MCF 10A (cell line): ENCODE measurements at regions of chr3 and their contacts with region 1.

Region 1: GRCh38 chr3:149936812-149937233 is 33.9 kb downstream of the PFN2 start:
- DNase-seq: peak; percentile 69
- H3K4me3 Mint-ChIP-seq: peak overlapping the region; percentile 19
- H3K27ac Mint-ChIP-seq: no peak overlapping the region
- H3K4me1 Mint-ChIP-seq: peaks cover 28% of the 10 kb centered on the region
- H3K27me3 Mint-ChIP-seq: no peaks in the 10 kb centered on the region
- CTCF ChIP-seq: peak; percentile 81

Region 2: GRCh38 chr3:149925860-149926259 is 11.0 kb before region 1 on chr3:
- CTCF ChIA-PET with region 1: interaction called, 20 read pairs
- POLR2A ChIA-PET with region 1: no interaction called
- intact Hi-C with region 1: no loop called
- DNase-seq: no peak
- H3K4me3 Mint-ChIP-seq: no peak overlapping the region
- H3K27ac Mint-ChIP-seq: peak overlapping the region; percentile 20
- H3K4me1 Mint-ChIP-seq: no peaks in the 10 kb centered on the region
- H3K27me3 Mint-ChIP-seq: no peaks in the 10 kb centered on the region
- CTCF ChIP-seq: no peak

Region 3: DNA sequence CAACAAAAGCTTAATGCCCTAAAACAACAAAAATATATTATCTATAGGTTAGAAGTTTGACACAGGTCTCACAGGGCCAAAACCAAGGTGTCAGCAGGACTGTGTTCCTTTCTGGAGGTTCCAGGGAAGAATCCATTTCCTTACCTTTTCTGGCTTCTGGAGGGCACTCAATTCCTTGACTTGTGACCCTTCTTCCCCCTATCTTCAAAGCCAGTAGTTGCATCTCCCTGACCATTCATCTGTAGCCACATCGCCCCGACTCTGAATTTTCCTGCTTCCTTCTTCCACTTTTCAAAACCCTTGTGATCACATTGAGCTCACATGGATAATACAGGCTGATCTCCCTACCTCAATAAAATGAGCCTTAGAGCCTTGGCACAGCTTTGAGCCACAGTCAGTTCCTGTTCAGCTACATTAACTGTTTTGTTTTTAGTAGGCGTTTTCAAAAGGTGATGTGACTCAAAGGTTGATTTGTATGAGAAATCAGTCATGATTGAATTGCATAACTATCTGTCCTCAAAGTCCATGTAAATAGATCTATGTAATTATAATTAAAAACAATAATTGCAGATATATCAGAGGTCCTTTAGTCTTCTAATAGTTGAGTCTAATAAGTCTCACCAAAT is 21.5 kb after region 1 on chr3:
- CTCF ChIA-PET with region 1: interaction called, 24 read pairs
- POLR2A ChIA-PET with region 1: no interaction called
- intact Hi-C with region 1: no loop called
- DNase-seq: peak; percentile 44
- H3K4me3 Mint-ChIP-seq: no peak overlapping the region
- H3K27ac Mint-ChIP-seq: peak overlapping the region; percentile 61
- H3K4me1 Mint-ChIP-seq: peaks cover 13% of the 10 kb centered on the region
- H3K27me3 Mint-ChIP-seq: no peaks in the 10 kb centered on the region
- CTCF ChIP-seq: no peak

Region 4: GRCh38 chr3:149969940-149970715 is 33.3 kb after region 1 on chr3:
- CTCF ChIA-PET with region 1: interaction called, 21 read pairs
- POLR2A ChIA-PET with region 1: interaction called, 3 read pairs
- intact Hi-C with region 1: loop called (anchors 2 kb)
- DNase-seq: peak; percentile 80
- H3K4me3 Mint-ChIP-seq: peak overlapping the region; percentile 80
- H3K27ac Mint-ChIP-seq: peak overlapping the region; percentile 84
- H3K4me1 Mint-ChIP-seq: peaks cover 28% of the 10 kb centered on the region
- H3K27me3 Mint-ChIP-seq: no peaks in the 10 kb centered on the region
- CTCF ChIP-seq: no peak

Region 5: GRCh38 chr3:149983628-149984027 is 46.8 kb after region 1 on chr3:
- CTCF ChIA-PET with region 1: no interaction called
- POLR2A ChIA-PET with region 1: no interaction called
- intact Hi-C with region 1: no loop called
- DNase-seq: no peak
- H3K4me3 Mint-ChIP-seq: no peak overlapping the region
- H3K27ac Mint-ChIP-seq: no peak overlapping the region
- H3K4me1 Mint-ChIP-seq: no peaks in the 10 kb centered on the region
- H3K27me3 Mint-ChIP-seq: no peaks in the 10 kb centered on the region
- CTCF ChIP-seq: no peak

Region 6: DNA sequence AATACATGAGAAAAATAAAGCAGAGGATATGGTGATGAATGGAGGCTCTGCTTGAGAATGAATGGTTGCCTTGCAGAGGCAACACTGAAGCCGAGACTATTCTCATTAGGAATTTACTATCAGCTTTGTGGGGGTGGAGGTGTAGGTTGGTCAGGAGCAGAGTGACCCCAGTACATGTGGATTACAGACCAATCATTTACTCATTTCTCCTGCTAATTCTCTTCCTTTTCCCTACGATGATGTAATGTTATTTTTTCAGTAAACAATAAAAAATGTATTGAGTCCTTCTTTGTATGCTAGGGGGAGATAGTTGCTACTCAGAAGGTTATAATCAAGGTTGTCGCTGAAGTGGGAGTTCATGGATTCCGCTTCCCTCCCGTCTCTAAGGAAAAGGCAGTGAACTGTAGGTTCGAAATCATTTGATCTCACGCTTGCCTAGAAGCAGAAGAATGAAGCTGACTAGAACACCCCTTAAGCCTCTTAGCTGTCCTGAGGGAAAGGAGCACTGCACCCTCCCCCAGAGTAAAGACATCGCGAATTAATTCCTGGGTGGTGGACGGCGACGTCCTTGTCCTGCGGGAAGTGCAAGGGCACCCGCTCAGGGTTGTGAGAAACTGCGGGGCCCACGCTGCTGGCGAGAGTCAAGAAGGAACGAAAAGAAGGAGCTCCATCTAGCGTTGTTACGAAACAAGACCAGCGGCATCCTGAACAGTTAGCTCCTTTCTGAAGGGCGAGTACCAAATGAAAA is 247.0 kb after region 1 on chr3:
- CTCF ChIA-PET with region 1: interaction called, 20 read pairs
- POLR2A ChIA-PET with region 1: no interaction called
- intact Hi-C with region 1: loop called (anchors 1 kb)
- DNase-seq: peak; percentile 84
- H3K4me3 Mint-ChIP-seq: no peak overlapping the region
- H3K27ac Mint-ChIP-seq: no peak overlapping the region
- H3K4me1 Mint-ChIP-seq: peaks cover 7% of the 10 kb centered on the region
- H3K27me3 Mint-ChIP-seq: no peaks in the 10 kb centered on the region
- CTCF ChIP-seq: peak; percentile 70

Region 7: GRCh38 chr3:150227839-150228238 is 291.0 kb after region 1 on chr3:
- CTCF ChIA-PET with region 1: interaction called, 13 read pairs
- POLR2A ChIA-PET with region 1: no interaction called
- intact Hi-C with region 1: no loop called
- DNase-seq: peak; percentile 74
- H3K4me3 Mint-ChIP-seq: no peak overlapping the region
- H3K27ac Mint-ChIP-seq: no peak overlapping the region
- H3K4me1 Mint-ChIP-seq: peaks cover under 1% of the 10 kb centered on the region
- H3K27me3 Mint-ChIP-seq: no peaks in the 10 kb centered on the region
- CTCF ChIP-seq: peak; percentile 67